ENCODE measurements at regions of chr5 and their contacts with region 1.

Region 1: DNA sequence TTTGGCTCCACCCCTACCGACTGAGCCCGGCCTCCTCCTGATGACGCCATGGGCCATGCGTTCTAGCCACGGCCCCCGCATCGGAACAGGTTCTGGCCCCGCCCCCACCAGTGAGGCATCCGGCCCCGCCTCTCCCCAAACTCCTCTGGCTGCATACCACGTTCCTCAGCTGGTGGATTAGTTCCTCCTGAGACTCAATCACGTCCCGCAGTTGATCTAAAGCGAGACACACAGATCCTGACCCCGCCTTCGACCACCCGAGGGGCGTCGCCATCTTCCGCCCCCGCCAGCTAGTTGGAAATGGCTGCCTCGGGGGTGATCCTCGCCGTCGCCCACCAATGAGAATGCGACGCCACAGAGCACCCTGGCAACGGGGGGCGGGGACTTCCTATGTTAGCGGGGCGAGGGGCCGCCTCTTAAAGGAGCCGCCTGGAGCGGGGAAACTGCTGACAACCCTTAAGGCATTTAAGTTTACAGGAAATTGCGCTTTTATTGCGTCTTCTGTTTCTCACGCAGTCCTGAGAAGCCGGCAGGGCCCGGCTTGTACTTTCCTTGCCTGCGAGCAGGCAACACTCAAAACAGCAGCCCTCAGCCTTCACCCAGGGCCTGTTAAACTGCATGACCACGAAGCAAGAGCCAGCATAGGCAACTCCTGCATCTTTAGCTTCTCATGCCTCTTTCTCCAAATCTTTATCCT is at the start of gene SPATA24:
- DNase-seq: peak; percentile 98
- ATAC-seq: peak; percentile 93
- H3K4me3 Mint-ChIP-seq: peak within 1 kb of the TSS; percentile 94
- H3K27ac Mint-ChIP-seq: peak within 1 kb of the TSS; percentile 100
- H3K4me1 Mint-ChIP-seq: peaks cover 16% of the 10 kb centered on the region
- H3K27me3 Mint-ChIP-seq: no peaks in the 10 kb centered on the region
- CTCF ChIP-seq: no peak
- total RNA-seq, gene SPATA24: 12.9 to 13.9 TPM (median 13.2 TPM) in 3 replicates

Region 2: GRCh38 chr5:139392678-139393496 is 11.0 kb before region 1 on chr5:
- CTCF ChIA-PET with region 1: interaction called, 31 read pairs
- POLR2A ChIA-PET with region 1: interaction called, 4 read pairs
- DNase-seq: peak; percentile 88
- ATAC-seq: peak; percentile 67
- H3K4me3 Mint-ChIP-seq: peak overlapping the region; percentile 87
- H3K27ac Mint-ChIP-seq: no peak overlapping the region
- H3K4me1 Mint-ChIP-seq: peaks cover 43% of the 10 kb centered on the region
- H3K27me3 Mint-ChIP-seq: peaks cover 39% of the 10 kb centered on the region
- CTCF ChIP-seq: no peak

Region 3: DNA sequence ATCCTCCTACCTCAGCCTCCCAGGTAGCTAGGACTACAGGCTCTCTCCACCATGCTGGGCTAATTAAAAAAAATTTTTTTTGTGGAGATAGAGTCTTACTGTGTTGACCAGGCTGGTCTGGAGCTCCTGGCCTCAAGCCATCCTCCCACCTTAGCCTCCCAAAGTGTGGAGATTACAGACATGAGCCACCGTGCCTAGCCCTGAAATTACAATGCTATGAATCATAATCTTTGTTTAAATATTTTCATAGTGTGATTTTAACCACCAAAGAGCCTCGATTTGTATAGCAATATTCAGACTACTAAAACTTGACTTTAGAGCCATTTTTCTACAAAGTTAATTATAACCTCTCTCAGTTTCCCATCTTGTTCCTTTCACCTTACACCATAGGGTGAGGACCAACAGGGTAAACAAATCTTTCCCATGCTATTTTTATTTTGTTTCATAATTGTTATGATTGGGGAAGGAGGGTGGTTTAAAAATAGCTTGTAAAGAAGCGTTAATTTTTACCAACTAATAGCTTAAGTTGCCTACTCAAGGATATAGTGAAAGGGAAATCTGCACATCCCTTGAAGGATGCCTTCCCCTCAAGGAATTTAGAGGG is 189.9 kb after region 1 on chr5:
- CTCF ChIA-PET with region 1: no interaction called
- POLR2A ChIA-PET with region 1: interaction called, 11 read pairs
- DNase-seq: no peak
- ATAC-seq: no peak
- H3K4me3 Mint-ChIP-seq: no peak overlapping the region
- H3K27ac Mint-ChIP-seq: no peak overlapping the region
- H3K4me1 Mint-ChIP-seq: peaks cover 22% of the 10 kb centered on the region
- H3K27me3 Mint-ChIP-seq: no peaks in the 10 kb centered on the region
- CTCF ChIP-seq: no peak